Right lobe of liver (tissue), 6 donors: ENCODE measurements at regions of chr15 and their contacts with region 1.

Region 1: DNA sequence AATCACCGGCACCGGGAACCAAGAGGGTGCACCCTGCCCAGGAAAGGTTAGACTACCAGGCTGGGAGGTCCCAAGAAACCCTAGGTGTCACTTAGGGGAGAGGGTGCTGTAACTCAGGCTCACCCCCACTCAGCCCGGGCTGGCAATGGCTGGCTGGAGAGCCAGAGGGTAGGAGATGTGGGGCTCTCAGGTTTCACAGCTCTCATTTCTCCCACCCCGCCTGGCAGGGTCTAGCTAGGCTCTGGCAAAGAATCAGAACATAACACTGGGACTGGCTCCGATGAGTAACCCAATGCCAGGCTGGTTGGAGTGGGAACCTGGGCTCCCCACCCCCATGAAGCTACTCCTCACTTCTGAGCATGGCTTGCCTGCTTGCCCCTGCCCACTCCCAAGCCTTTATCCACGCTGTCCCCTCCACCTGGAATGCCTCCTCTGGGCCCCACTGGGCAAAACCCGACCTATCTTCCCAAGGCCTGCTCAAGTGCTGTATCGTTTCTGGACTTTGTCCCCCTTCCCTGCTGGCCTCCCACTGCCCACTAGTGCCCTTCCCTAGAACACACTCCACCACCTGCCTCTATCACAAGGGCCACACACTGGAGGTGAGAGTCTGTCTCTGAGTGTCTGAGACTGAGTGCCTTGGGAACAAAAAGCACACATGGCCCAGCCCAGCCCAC is 2.0 kb downstream of the CIB2 start:
- DNase-seq: no peak
- ATAC-seq: no peak
- H3K4me3 ChIP-seq: no peak overlapping the region
- H3K27ac ChIP-seq: no peak overlapping the region
- H3K4me1 ChIP-seq: peaks cover 0 to 15% (median 0%) of the 10 kb centered on the region in 4 donors
- H3K27me3 ChIP-seq: no peaks in the 10 kb centered on the region
- CTCF ChIP-seq: no peak
- POLR2A ChIP-seq: no peak

Region 2: GRCh38 chr15:78000091-78000926 is 128.9 kb before region 1 on chr15:
- intact Hi-C with region 1: no loop called
- DNase-seq: peak; percentile 93 to 97 (median 96)
- ATAC-seq: peak; percentile 82 to 91 (median 88)
- H3K4me3 ChIP-seq: no peak overlapping the region
- H3K27ac ChIP-seq: peak overlapping the region in 2 of 3 donors; percentile 56 to 59
- H3K4me1 ChIP-seq: peaks cover 0 to 33% (median 20%) of the 10 kb centered on the region in 4 donors
- H3K27me3 ChIP-seq: no peaks in the 10 kb centered on the region
- CTCF ChIP-seq: peak; percentile 66 to 95 (median 86)
- POLR2A ChIP-seq: peak; percentile 76

Region 3: GRCh38 chr15:78241007-78241406 is 111.8 kb after region 1 on chr15:
- intact Hi-C with region 1: loop called in 1 of 2 experiments (anchors 5 kb)
- DNase-seq: peak; percentile 87 to 89 (median 88)
- ATAC-seq: peak; percentile 98 to 99 (median 98)
- H3K4me3 ChIP-seq: no peak overlapping the region
- H3K27ac ChIP-seq: no peak overlapping the region
- H3K4me1 ChIP-seq: no peaks in the 10 kb centered on the region
- H3K27me3 ChIP-seq: no peaks in the 10 kb centered on the region
- CTCF ChIP-seq: peak; percentile 84 to 92 (median 90)
- POLR2A ChIP-seq: no peak

Region 4: GRCh38 chr15:78284758-78285157 is 155.5 kb after region 1 on chr15:
- intact Hi-C with region 1: no loop called
- DNase-seq: no peak
- ATAC-seq: no peak
- H3K4me3 ChIP-seq: no peak overlapping the region
- H3K27ac ChIP-seq: no peak overlapping the region
- H3K4me1 ChIP-seq: no peaks in the 10 kb centered on the region
- H3K27me3 ChIP-seq: no peaks in the 10 kb centered on the region
- CTCF ChIP-seq: no peak
- POLR2A ChIP-seq: no peak